ENCODE measurements at regions of chr3 and their contacts with region 1.

Region 1: GRCh38 chr3:120450600-120451271 is at the start of gene FSTL1:
- DNase-seq: peak in 1 of 2 donors; percentile 77
- H3K4me3 ChIP-seq: peak within 1 kb of the TSS; percentile 87 to 94
- H3K27ac ChIP-seq: peak within 1 kb of the TSS; percentile 98 to 99
- H3K4me1 ChIP-seq: peaks cover 16 to 24% of the 10 kb centered on the region in 2 donors
- H3K27me3 ChIP-seq: no peaks in the 10 kb centered on the region
- CTCF ChIP-seq: no peak
- total RNA-seq, gene FSTL1: 790 TPM

Region 2: GRCh38 chr3:120348981-120349818 is 101.5 kb before region 1 on chr3 and contains the start of gene LRRC58:
- intact Hi-C with region 1: loop called (anchors 2 kb)
- DNase-seq: peak; percentile 42 to 94
- H3K4me3 ChIP-seq: peak within 1 kb of the TSS; percentile 89 to 96
- H3K27ac ChIP-seq: peak within 1 kb of the TSS; percentile 92 to 94
- H3K4me1 ChIP-seq: peaks cover 0 to 14% of the 10 kb centered on the region in 2 donors
- H3K27me3 ChIP-seq: no peaks in the 10 kb centered on the region
- CTCF ChIP-seq: peak in 1 of 3 experiments; percentile 23
- total RNA-seq, gene LRRC58: 14.7 TPM

Region 3: DNA sequence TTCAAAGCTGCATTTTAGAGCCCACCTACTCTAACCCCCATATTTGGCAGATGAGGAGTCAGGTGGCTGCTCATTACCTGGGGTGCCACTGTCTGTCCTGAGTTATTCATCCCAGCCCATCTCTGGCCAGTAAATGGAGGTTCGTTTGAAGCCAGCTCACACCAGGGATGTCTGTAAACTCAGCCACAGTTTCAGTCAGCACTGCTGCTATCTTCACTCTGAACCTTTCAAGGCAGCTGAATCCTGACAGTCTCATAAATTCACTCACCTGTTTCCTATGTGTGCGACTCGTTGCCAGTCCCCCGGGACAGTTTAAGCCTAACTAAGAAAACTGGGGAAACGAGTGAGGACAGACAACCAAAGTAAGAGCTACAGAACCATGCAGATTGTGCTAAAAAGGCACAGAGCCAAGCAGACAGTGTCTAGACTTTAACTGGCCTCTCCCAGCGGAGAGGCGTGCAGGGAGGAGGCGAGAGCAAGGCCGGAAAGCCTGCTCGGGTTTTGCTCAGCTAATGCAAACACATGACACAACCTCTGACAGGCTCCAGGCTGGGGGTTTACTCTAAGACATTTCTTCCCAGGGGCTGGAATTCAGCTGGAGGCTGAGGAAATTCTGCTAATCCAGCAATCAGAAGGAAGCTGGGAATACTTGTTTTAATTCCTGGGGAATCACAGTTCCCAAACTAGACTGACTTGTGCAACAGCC is 11.9 kb before region 1 on chr3:
- intact Hi-C with region 1: loop called (anchors 1 kb)
- DNase-seq: peak in 1 of 2 donors; percentile 87
- H3K4me3 ChIP-seq: peak overlapping the region; percentile 11 to 23
- H3K27ac ChIP-seq: peak overlapping the region; percentile 80 to 88
- H3K4me1 ChIP-seq: peaks cover 33 to 86% of the 10 kb centered on the region in 2 donors
- H3K27me3 ChIP-seq: no peaks in the 10 kb centered on the region
- CTCF ChIP-seq: no peak

Region 4: GRCh38 chr3:120469447-120469846 is 18.7 kb after region 1 on chr3:
- intact Hi-C with region 1: loop called (anchors 2 kb)
- DNase-seq: no peak
- H3K4me3 ChIP-seq: no peak overlapping the region
- H3K27ac ChIP-seq: peak overlapping the region; percentile 14 to 40
- H3K4me1 ChIP-seq: peaks cover 0 to 13% of the 10 kb centered on the region in 2 donors
- H3K27me3 ChIP-seq: no peaks in the 10 kb centered on the region
- CTCF ChIP-seq: no peak

Region 5: GRCh38 chr3:120498556-120499346 is 48.0 kb after region 1 on chr3:
- intact Hi-C with region 1: loop called (anchors 1 kb)
- DNase-seq: no peak
- H3K4me3 ChIP-seq: no peak overlapping the region
- H3K27ac ChIP-seq: peak overlapping the region in 1 of 2 donors; percentile 50
- H3K4me1 ChIP-seq: peaks cover 7 to 26% of the 10 kb centered on the region in 2 donors
- H3K27me3 ChIP-seq: no peaks in the 10 kb centered on the region
- CTCF ChIP-seq: no peak

Region 6: GRCh38 chr3:120506828-120507774 is 56.4 kb after region 1 on chr3:
- intact Hi-C with region 1: loop called (anchors 2 kb)
- DNase-seq: peak in 1 of 2 donors; percentile 75
- H3K4me3 ChIP-seq: no peak overlapping the region
- H3K27ac ChIP-seq: peak overlapping the region; percentile 25 to 39
- H3K4me1 ChIP-seq: peaks cover 5 to 14% of the 10 kb centered on the region in 2 donors
- H3K27me3 ChIP-seq: no peaks in the 10 kb centered on the region
- CTCF ChIP-seq: peak; percentile 44 to 66 (median 50)

Measured in ascending aorta (tissue), 2 donors.